Dorsolateral prefrontal cortex (tissue), 120 donors: ENCODE measurements at regions of chr2 and their contacts with region 1.

Region 1: GRCh38 chr2:107128381-107128780 is 242.4 kb upstream of the ST6GAL2 start:
- DNase-seq: no peak
- H3K4me3 ChIP-seq: no peak overlapping the region
- H3K27ac ChIP-seq: no peak overlapping the region
- H3K27me3 ChIP-seq: no peaks in the 10 kb centered on the region
- CTCF ChIP-seq: no peak

Region 2: GRCh38 chr2:106642679-106643078 is 485.7 kb before region 1 on chr2:
- intact Hi-C with region 1: no loop called
- DNase-seq: no peak
- H3K4me3 ChIP-seq: no peak overlapping the region
- H3K27ac ChIP-seq: no peak overlapping the region
- H3K27me3 ChIP-seq: no peaks in the 10 kb centered on the region
- CTCF ChIP-seq: no peak

Region 3: GRCh38 chr2:106990297-106990696 is 138.1 kb before region 1 on chr2:
- intact Hi-C with region 1: loop called in 1 of 2 experiments (anchors 10 kb)
- DNase-seq: no peak
- H3K4me3 ChIP-seq: no peak overlapping the region
- H3K27ac ChIP-seq: no peak overlapping the region
- H3K27me3 ChIP-seq: no peaks in the 10 kb centered on the region
- CTCF ChIP-seq: no peak

Region 4: GRCh38 chr2:107502539-107502938 is 374.2 kb after region 1 on chr2:
- intact Hi-C with region 1: no loop called
- DNase-seq: no peak
- H3K4me3 ChIP-seq: peak overlapping the region in 1 of 59 donors; percentile 11
- H3K27ac ChIP-seq: no peak overlapping the region
- H3K27me3 ChIP-seq: peaks cover 0 to 6% (median 0%) of the 10 kb centered on the region in 45 donors
- CTCF ChIP-seq: no peak